CD8-positive, alpha-beta memory T cell (primary cell): ENCODE measurements at regions of chr9 and their contacts with region 1.

Region 1: GRCh38 chr9:33813712-33814641 is 3.0 kb upstream of the UBE2R2 start:
- DNase-seq: peak in 2 of 5 donors; percentile 47 to 63
- H3K4me3 ChIP-seq: no peak overlapping the region
- H3K4me3 Mint-ChIP-seq: peak overlapping the region in 1 of 7 donors; percentile 86
- H3K27ac ChIP-seq: no peak overlapping the region
- H3K27ac Mint-ChIP-seq: peak overlapping the region in 5 of 8 donors; percentile 78 to 98 (median 87)
- H3K4me1 ChIP-seq: peaks cover 13% of the 10 kb centered on the region
- H3K4me1 Mint-ChIP-seq: peaks cover 24 to 35% (median 33%) of the 10 kb centered on the region in 3 donors
- H3K27me3 ChIP-seq: no peaks in the 10 kb centered on the region
- H3K27me3 Mint-ChIP-seq: peaks cover 1 to 10% of the 10 kb centered on the region in 2 donors

Region 2: GRCh38 chr9:33728613-33729012 is 85.4 kb before region 1 on chr9:
- CTCF ChIA-PET with region 1: no interaction called
- POLR2A ChIA-PET with region 1: no interaction called
- DNase-seq: no peak
- H3K4me3 ChIP-seq: no peak overlapping the region
- H3K4me3 Mint-ChIP-seq: no peak overlapping the region
- H3K27ac ChIP-seq: no peak overlapping the region
- H3K27ac Mint-ChIP-seq: no peak overlapping the region
- H3K4me1 ChIP-seq: no peaks in the 10 kb centered on the region
- H3K4me1 Mint-ChIP-seq: no peaks in the 10 kb centered on the region
- H3K27me3 ChIP-seq: no peaks in the 10 kb centered on the region
- H3K27me3 Mint-ChIP-seq: peaks cover 11 to 35% of the 10 kb centered on the region in 2 donors

Region 3: GRCh38 chr9:33852216-33852826 is 38.3 kb after region 1 on chr9:
- CTCF ChIA-PET with region 1: interaction called, 49 read pairs
- POLR2A ChIA-PET with region 1: interaction called, 4 read pairs
- DNase-seq: peak; percentile 32 to 69 (median 42)
- H3K4me3 ChIP-seq: no peak overlapping the region
- H3K4me3 Mint-ChIP-seq: no peak overlapping the region
- H3K27ac ChIP-seq: no peak overlapping the region
- H3K27ac Mint-ChIP-seq: peak overlapping the region in 3 of 8 donors; percentile 9 to 31 (median 29)
- H3K4me1 ChIP-seq: peaks cover 8% of the 10 kb centered on the region
- H3K4me1 Mint-ChIP-seq: peaks cover 30 to 68% (median 46%) of the 10 kb centered on the region in 3 donors
- H3K27me3 ChIP-seq: no peaks in the 10 kb centered on the region
- H3K27me3 Mint-ChIP-seq: no peaks in the 10 kb centered on the region

Region 4: GRCh38 chr9:33924978-33925797 is 111.2 kb after region 1 on chr9:
- CTCF ChIA-PET with region 1: interaction called, 12 read pairs
- POLR2A ChIA-PET with region 1: no interaction called
- DNase-seq: no peak
- H3K4me3 ChIP-seq: no peak overlapping the region
- H3K4me3 Mint-ChIP-seq: no peak overlapping the region
- H3K27ac ChIP-seq: no peak overlapping the region
- H3K27ac Mint-ChIP-seq: peak overlapping the region in 5 of 8 donors; percentile 38 to 84 (median 68)
- H3K4me1 ChIP-seq: no peaks in the 10 kb centered on the region
- H3K4me1 Mint-ChIP-seq: no peaks in the 10 kb centered on the region
- H3K27me3 ChIP-seq: no peaks in the 10 kb centered on the region
- H3K27me3 Mint-ChIP-seq: no peaks in the 10 kb centered on the region